ENCODE measurements at regions of chr10 and their contacts with region 1.

Region 1: DNA sequence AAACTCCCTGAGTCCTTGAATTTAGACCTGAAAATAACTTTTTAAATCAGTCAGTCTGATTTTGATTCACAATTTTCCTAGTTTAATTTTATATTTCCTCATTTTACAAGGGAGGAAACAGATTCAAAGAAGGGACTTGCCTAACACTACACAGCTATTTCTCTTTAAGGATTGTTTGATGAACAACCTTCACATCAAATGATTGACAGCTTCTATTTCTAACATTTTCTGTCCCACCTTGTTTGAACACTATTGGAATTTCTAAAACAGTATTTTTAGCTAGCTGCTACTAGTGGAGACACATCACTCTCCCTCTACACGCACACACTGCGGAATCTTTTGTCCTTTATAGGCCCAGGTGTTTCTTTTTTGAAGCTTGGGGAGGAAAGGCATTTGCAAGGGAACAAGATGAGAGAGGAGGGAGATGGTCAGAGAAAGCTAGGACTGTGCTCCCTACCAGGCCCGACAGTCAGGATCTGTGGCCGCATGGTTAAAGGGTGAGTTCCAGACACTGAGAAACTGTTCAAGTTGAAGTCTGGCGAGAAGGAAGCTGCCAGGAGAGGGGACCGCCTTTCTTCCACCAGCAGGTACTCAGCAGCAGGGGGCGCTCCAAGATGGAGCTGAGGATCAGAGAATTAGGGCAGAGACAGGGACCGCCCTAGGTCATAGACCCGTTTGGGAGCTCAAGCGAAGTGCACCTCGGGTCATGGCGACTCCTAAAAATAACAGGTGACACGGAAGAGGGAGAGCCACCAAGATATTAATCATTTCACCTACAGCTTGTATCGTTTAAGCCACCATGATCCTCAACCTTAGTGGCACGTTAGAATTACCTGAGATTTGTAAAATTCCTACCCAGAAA is 49.7 kb downstream of the DNAJC12 start:
- DNase-seq: peak; percentile 92
- ATAC-seq: peak; percentile 71
- H3K4me3 Mint-ChIP-seq: no peak overlapping the region
- H3K27ac Mint-ChIP-seq: peak overlapping the region; percentile 26
- H3K4me1 Mint-ChIP-seq: peaks cover 48% of the 10 kb centered on the region
- H3K27me3 Mint-ChIP-seq: no peaks in the 10 kb centered on the region
- CTCF ChIP-seq: peak; percentile 83

Region 2: GRCh38 chr10:67587771-67588170 is 200.5 kb before region 1 on chr10:
- CTCF ChIA-PET with region 1: no interaction called
- POLR2A ChIA-PET with region 1: no interaction called
- intact Hi-C with region 1: no loop called
- DNase-seq: no peak
- ATAC-seq: no peak
- H3K4me3 Mint-ChIP-seq: no peak overlapping the region
- H3K27ac Mint-ChIP-seq: no peak overlapping the region
- H3K4me1 Mint-ChIP-seq: no peaks in the 10 kb centered on the region
- H3K27me3 Mint-ChIP-seq: peaks cover 2% of the 10 kb centered on the region
- CTCF ChIP-seq: no peak

Region 3: DNA sequence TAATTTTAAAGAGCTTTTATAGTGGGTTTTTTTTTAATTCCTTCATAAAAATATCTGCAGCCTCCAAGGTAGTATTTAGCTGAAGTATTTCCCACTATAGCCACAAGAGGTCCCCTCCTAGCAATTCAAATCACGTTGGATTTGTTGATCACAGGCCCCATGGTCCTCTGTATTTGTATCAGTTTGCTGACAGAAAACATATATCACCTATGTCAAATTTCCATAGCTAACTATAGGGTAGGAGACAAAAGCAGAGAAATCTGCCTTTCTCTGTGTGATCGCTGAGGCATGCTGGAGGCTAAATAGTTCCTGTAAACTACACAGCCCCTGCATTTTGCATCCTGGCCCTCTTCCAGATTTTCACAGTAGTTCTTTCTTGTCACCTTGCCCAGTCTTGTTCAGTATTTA is 90.5 kb before region 1 on chr10:
- CTCF ChIA-PET with region 1: interaction called, 18 read pairs
- POLR2A ChIA-PET with region 1: no interaction called
- intact Hi-C with region 1: no loop called
- DNase-seq: peak; percentile 9
- ATAC-seq: peak; percentile 83
- H3K4me3 Mint-ChIP-seq: no peak overlapping the region
- H3K27ac Mint-ChIP-seq: no peak overlapping the region
- H3K4me1 Mint-ChIP-seq: no peaks in the 10 kb centered on the region
- H3K27me3 Mint-ChIP-seq: peaks cover 28% of the 10 kb centered on the region
- CTCF ChIP-seq: peak; percentile 75

Region 4: DNA sequence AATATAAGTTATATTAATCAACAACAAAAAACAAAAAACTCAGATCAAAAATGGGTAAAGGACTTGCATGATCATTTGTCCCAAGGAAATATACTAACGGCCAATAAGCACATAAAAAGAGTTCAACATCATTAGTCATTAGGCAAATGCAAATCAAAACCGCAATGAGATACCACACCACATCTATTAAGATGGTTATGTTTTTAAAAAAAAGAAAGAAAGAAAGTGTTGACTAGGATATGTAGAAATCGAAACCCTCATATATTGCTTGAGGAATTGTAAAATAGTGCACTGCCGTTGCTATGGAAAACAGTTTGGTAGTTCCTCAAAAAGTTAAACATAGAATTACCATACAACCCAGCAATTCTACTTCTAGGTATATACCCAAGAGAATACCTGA is 52.8 kb before region 1 on chr10:
- CTCF ChIA-PET with region 1: no interaction called
- POLR2A ChIA-PET with region 1: no interaction called
- intact Hi-C with region 1: no loop called
- DNase-seq: no peak
- ATAC-seq: no peak
- H3K4me3 Mint-ChIP-seq: no peak overlapping the region
- H3K27ac Mint-ChIP-seq: no peak overlapping the region
- H3K4me1 Mint-ChIP-seq: peaks cover 5% of the 10 kb centered on the region
- H3K27me3 Mint-ChIP-seq: peaks cover 2% of the 10 kb centered on the region
- CTCF ChIP-seq: no peak

Region 5: DNA sequence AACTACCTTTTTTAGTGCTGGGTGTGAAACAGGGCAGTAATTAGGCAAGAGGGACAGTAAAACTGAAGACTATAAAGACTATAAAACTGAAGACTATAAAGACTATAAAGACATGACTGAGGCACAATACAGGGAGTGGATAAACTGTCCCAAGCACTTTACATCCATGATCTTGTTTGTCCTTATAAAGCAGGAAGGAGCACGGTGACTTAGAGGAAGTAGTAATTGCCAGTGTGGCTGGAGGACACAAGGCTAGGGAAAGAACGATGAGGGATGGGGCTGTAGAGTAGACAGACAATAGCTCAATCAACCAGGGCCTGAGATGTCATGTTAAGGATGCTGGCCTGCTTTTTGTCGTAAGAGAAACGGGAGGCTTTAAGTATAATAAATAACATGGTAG is 23.8 kb after region 1 on chr10:
- CTCF ChIA-PET with region 1: interaction called, 14 read pairs
- POLR2A ChIA-PET with region 1: interaction called, 3 read pairs
- intact Hi-C with region 1: no loop called
- DNase-seq: no peak
- ATAC-seq: no peak
- H3K4me3 Mint-ChIP-seq: no peak overlapping the region
- H3K27ac Mint-ChIP-seq: no peak overlapping the region
- H3K4me1 Mint-ChIP-seq: peaks cover 22% of the 10 kb centered on the region
- H3K27me3 Mint-ChIP-seq: peaks cover 7% of the 10 kb centered on the region
- CTCF ChIP-seq: no peak

Region 6: GRCh38 chr10:67837541-67838314 is 49.5 kb after region 1 on chr10 and contains the start of gene DNAJC12:
- CTCF ChIA-PET with region 1: interaction called, 13 read pairs
- POLR2A ChIA-PET with region 1: no interaction called
- intact Hi-C with region 1: no loop called
- DNase-seq: peak; percentile 22
- ATAC-seq: peak; percentile 100
- H3K4me3 Mint-ChIP-seq: peak within 1 kb of the TSS; percentile 69
- H3K27ac Mint-ChIP-seq: no peak within 1 kb of the TSS
- H3K4me1 Mint-ChIP-seq: peaks cover 6% of the 10 kb centered on the region
- H3K27me3 Mint-ChIP-seq: no peaks in the 10 kb centered on the region
- CTCF ChIP-seq: no peak
- total RNA-seq, gene DNAJC12: 29.1 to 32.5 TPM

Region 7: DNA sequence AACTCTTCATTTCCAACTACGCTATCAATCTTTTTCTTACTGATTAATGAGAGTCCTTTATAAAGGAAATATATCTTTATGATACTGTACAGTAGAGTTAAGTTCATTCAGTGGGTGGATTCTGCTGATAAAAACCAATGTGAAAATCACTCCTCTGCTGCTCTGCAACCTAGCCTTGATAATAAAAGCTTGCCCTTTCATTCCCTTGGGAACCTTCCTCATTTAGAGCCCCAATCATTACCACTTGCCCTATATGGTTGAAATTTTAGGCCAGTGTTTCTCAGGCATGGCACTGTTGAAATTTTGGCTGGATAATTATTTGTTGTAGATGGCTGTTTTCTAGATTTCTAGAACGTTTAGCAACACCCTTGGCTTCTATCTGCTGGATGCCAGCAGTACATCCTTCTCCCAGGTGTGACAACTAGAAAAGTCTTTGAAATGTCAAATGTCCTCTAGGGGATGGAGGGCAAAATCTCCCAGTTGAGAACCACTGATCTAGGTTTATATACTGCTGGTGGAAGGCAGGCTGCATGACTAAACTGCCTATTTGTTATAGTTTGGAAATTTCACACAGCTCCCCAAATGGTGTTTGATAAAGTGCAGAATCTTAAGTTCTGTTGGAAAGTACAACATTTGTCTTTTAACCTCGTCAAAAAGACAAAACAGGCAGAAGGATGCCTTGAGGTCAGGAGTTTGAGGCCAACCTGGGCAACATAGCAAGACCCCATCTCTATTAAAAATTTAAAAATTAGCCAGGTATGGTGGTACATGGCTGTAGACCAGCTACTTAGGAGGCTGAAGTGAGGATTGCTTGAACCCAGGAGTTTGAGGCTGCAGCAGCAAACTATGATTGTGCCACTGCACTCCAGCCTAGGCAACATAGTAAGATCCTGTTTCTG is 87.3 kb after region 1 on chr10:
- CTCF ChIA-PET with region 1: no interaction called
- POLR2A ChIA-PET with region 1: no interaction called
- intact Hi-C with region 1: no loop called
- DNase-seq: no peak
- ATAC-seq: no peak
- H3K4me3 Mint-ChIP-seq: no peak overlapping the region
- H3K27ac Mint-ChIP-seq: no peak overlapping the region
- H3K4me1 Mint-ChIP-seq: no peaks in the 10 kb centered on the region
- H3K27me3 Mint-ChIP-seq: no peaks in the 10 kb centered on the region
- CTCF ChIP-seq: no peak

Region 8: GRCh38 chr10:67912339-67912946 is 124.2 kb after region 1 on chr10:
- CTCF ChIA-PET with region 1: interaction called, 10 read pairs
- POLR2A ChIA-PET with region 1: no interaction called
- intact Hi-C with region 1: no loop called
- DNase-seq: no peak
- ATAC-seq: no peak
- H3K4me3 Mint-ChIP-seq: no peak overlapping the region
- H3K27ac Mint-ChIP-seq: peak overlapping the region; percentile 77
- H3K4me1 Mint-ChIP-seq: peaks cover 29% of the 10 kb centered on the region
- H3K27me3 Mint-ChIP-seq: no peaks in the 10 kb centered on the region
- CTCF ChIP-seq: no peak

Region 9: GRCh38 chr10:68023292-68023691 is 235.0 kb after region 1 on chr10:
- CTCF ChIA-PET with region 1: no interaction called
- POLR2A ChIA-PET with region 1: no interaction called
- intact Hi-C with region 1: no loop called
- DNase-seq: no peak
- ATAC-seq: peak; percentile 34
- H3K4me3 Mint-ChIP-seq: no peak overlapping the region
- H3K27ac Mint-ChIP-seq: no peak overlapping the region
- H3K4me1 Mint-ChIP-seq: peaks cover 5% of the 10 kb centered on the region
- H3K27me3 Mint-ChIP-seq: no peaks in the 10 kb centered on the region
- CTCF ChIP-seq: no peak

Region 10: DNA sequence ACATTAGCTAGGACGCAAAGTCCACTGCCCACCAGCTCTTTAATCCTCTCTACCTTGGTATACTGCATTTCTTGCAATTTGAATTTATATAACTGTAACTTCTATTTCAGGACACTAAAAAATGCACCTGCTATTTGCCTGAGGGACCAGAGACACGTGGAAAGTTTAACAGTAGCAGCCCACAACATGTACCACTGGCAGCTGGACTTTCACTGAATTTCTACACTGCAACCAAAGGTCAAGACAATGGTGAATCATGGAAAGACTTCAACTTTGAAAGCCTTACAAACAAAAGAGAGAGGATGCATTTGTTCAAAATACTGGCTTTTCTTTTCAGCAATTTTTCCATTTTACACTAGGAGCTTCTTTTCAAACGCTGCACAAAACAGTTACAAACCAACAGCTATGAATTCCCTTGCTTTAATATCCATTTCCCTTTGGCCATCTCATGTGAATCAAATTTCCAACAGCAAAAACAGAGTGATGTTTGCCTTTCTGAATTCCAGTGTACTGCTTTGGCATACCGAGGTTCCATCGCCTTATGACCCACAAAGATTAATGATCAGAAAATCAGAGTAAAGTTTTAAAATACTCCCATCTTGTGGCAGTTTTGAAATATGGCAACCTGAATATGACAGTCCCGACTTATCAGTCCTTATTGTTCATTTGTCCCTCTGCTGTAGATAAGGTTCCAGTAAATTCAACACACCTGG is 513.7 kb after region 1 on chr10:
- CTCF ChIA-PET with region 1: interaction called, 20 read pairs
- POLR2A ChIA-PET with region 1: no interaction called
- intact Hi-C with region 1: no loop called
- DNase-seq: no peak
- ATAC-seq: peak; percentile 53
- H3K4me3 Mint-ChIP-seq: no peak overlapping the region
- H3K27ac Mint-ChIP-seq: no peak overlapping the region
- H3K4me1 Mint-ChIP-seq: no peaks in the 10 kb centered on the region
- H3K27me3 Mint-ChIP-seq: no peaks in the 10 kb centered on the region
- CTCF ChIP-seq: peak; percentile 70